ENCODE measurements at regions of chr6 and their contacts with region 1.

Region 1: GRCh38 chr6:2988426-2989331 is 11.0 kb upstream of the NQO2 start:
- DNase-seq: peak; percentile 95
- ATAC-seq: peak; percentile 83
- H3K4me3 ChIP-seq: peak overlapping the region; percentile 72
- H3K27ac ChIP-seq: peak overlapping the region; percentile 90
- H3K4me1 ChIP-seq: peaks cover 14% of the 10 kb centered on the region
- H3K27me3 ChIP-seq: no peaks in the 10 kb centered on the region
- CTCF ChIP-seq: peak; percentile 89
- POLR2A ChIP-seq: peak; percentile 61
- RAD21 ChIP-seq: peak; percentile 84

Region 2: DNA sequence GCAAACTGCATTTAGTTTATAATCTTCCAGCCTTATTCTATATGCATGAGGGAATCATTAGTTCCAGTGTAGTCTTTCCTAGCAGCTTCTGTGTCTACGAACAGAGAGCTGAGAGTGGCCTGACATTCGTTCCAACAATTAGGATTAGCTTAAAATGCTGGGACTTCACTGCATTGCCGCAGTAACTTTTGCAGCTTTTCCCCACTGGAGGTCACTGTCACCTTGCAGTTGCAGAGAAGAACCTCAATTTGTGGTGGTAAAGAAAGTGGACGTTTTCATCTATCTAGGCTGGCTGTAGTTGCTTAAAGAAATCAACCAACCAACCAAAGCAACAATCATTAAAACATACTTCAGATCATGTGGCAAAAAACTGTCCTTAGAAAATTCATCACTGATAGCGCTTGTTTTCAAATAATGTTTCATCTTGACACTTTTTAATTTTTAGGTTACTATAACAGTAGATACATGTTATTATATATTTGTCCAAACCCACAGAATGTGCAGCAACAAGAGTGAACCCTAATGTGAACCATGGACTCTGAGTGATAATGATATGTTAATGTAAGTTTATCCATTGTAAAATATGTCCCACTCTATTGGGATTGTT is 250.2 kb before region 1 on chr6:
- CTCF ChIA-PET with region 1: interaction called, 5 read pairs
- POLR2A ChIA-PET with region 1: no interaction called
- dilution Hi-C with region 1: no loop called
- in situ Hi-C with region 1: no loop called
- intact Hi-C with region 1: loop called (anchors 1 kb)
- DNase-seq: peak; percentile 80
- ATAC-seq: peak; percentile 78
- H3K4me3 ChIP-seq: no peak overlapping the region
- H3K27ac ChIP-seq: no peak overlapping the region
- H3K4me1 ChIP-seq: peaks cover 11% of the 10 kb centered on the region; the same call in 1 of the 2 replicates
- H3K27me3 ChIP-seq: no peaks in the 10 kb centered on the region
- CTCF ChIP-seq: peak; percentile 92
- POLR2A ChIP-seq: no peak
- RAD21 ChIP-seq: peak; percentile 94

Region 3: DNA sequence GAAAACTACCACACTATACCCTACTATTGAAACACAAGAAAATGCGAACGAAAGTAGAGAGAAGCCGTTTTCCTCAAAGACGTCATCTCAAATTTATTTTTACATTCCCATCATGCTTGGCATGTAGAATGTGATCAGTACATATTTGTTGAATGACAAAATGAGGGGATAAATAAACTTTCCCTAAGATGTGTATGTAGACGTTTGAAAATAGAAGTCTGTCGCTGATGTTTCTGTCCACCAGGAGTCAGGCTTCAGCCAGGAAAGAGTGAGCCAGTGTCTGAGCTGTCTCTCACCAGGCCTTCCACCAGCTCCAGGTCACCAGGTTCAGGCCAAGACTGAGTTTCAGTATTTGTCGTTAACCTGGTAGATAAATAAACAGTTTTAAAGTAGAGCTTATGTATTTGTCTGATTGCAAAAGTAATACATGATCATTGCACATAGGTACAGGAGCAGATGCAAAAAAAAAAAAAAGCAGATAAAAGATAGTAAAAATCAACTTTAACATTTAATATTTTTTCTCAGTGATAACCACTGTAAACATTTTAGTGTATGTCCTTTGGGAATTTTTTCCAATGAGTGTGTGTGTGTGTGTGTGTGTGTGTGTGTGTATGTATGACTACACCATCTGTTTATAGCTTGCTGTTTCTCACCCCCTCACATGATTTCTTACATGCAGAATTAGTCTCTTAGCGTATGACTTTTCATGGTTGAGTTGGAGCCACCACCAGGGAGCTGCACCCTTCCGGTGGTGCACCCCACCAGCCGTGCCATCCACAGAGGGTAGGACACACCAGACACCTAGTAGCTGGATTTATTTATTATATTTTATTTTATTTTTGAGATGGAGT is 197.3 kb before region 1 on chr6:
- CTCF ChIA-PET with region 1: interaction called, 14 read pairs
- POLR2A ChIA-PET with region 1: interaction called, 8 read pairs
- dilution Hi-C with region 1: no loop called
- in situ Hi-C with region 1: no loop called
- intact Hi-C with region 1: loop called (anchors 1 kb)
- DNase-seq: peak; percentile 97
- ATAC-seq: peak; percentile 84
- H3K4me3 ChIP-seq: peak overlapping the region; percentile 20; the same call in 1 of the 2 replicates
- H3K27ac ChIP-seq: peak overlapping the region; percentile 91
- H3K4me1 ChIP-seq: peaks cover 18% of the 10 kb centered on the region
- H3K27me3 ChIP-seq: no peaks in the 10 kb centered on the region
- CTCF ChIP-seq: peak; percentile 96
- POLR2A ChIP-seq: peak; percentile 76; the same call in 1 of the 2 replicates
- RAD21 ChIP-seq: peak; percentile 97

Region 4: DNA sequence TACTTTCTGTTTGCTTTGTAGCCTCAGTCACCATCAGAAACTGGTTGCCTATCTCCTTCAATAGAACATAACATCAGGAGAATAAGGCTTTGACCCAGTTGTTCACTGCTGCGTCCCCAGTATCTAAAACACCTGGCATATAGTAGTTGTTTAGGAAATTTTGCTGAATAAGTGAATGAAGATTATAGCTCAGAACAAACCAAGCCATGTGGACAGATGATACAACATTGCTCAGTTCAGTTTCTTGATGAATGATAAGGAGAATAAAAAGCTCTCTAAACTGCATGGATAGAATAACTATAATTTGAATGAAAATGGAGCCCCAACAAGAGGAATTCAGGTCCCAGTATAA is 141.8 kb before region 1 on chr6:
- CTCF ChIA-PET with region 1: interaction called, 13 read pairs
- POLR2A ChIA-PET with region 1: interaction called, 12 read pairs
- dilution Hi-C with region 1: no loop called
- in situ Hi-C with region 1: no loop called
- intact Hi-C with region 1: loop called (anchors 1 kb)
- DNase-seq: no peak
- ATAC-seq: no peak
- H3K4me3 ChIP-seq: peak overlapping the region; percentile 34; the same call in 1 of the 2 replicates
- H3K27ac ChIP-seq: peak overlapping the region; percentile 81
- H3K4me1 ChIP-seq: peaks cover 18% of the 10 kb centered on the region
- H3K27me3 ChIP-seq: no peaks in the 10 kb centered on the region
- CTCF ChIP-seq: no peak
- POLR2A ChIP-seq: no peak
- RAD21 ChIP-seq: no peak

Region 5: GRCh38 chr6:2971420-2972218 is 17.1 kb before region 1 on chr6 and contains the start of gene SERPINB6:
- CTCF ChIA-PET with region 1: interaction called, 6 read pairs
- POLR2A ChIA-PET with region 1: interaction called, 4 read pairs
- dilution Hi-C with region 1: no loop called
- in situ Hi-C with region 1: no loop called
- intact Hi-C with region 1: loop called (anchors 1 kb)
- DNase-seq: peak; percentile 71
- ATAC-seq: peak; percentile 68
- H3K4me3 ChIP-seq: peak within 1 kb of the TSS; percentile 42
- H3K27ac ChIP-seq: peak within 1 kb of the TSS; percentile 78
- H3K4me1 ChIP-seq: peaks cover 6% of the 10 kb centered on the region
- H3K27me3 ChIP-seq: no peaks in the 10 kb centered on the region
- CTCF ChIP-seq: no peak
- POLR2A ChIP-seq: 0 out of 2 replicates have a peak, but pooled peaks have one; percentile 19
- RAD21 ChIP-seq: no peak
- total RNA-seq, gene SERPINB6: 37.1 and 60.3 TPM in 2 replicates

Region 6: GRCh38 chr6:3258720-3259490 is 270.2 kb after region 1 on chr6 and contains the start of gene PSMG4:
- CTCF ChIA-PET with region 1: no interaction called
- POLR2A ChIA-PET with region 1: no interaction called
- dilution Hi-C with region 1: no loop called
- in situ Hi-C with region 1: loop called (anchors 10 kb)
- intact Hi-C with region 1: no loop called
- DNase-seq: peak; percentile 82
- ATAC-seq: peak; percentile 96
- H3K4me3 ChIP-seq: peak within 1 kb of the TSS; percentile 99
- H3K27ac ChIP-seq: peak within 1 kb of the TSS; percentile 85
- H3K4me1 ChIP-seq: peaks cover 3% of the 10 kb centered on the region; the same call in 1 of the 2 replicates
- H3K27me3 ChIP-seq: peaks cover 1% of the 10 kb centered on the region; the same call in 1 of the 2 replicates
- CTCF ChIP-seq: no peak
- POLR2A ChIP-seq: peak; percentile 61
- RAD21 ChIP-seq: no peak
- total RNA-seq, gene PSMG4: 5.6 and 6.7 TPM in 2 replicates

Region 7: GRCh38 chr6:4018172-4018905 is 1029.7 kb after region 1 on chr6:
- CTCF ChIA-PET with region 1: no interaction called
- POLR2A ChIA-PET with region 1: no interaction called
- dilution Hi-C with region 1: no loop called
- in situ Hi-C with region 1: no loop called
- intact Hi-C with region 1: no loop called
- DNase-seq: peak; percentile 95
- ATAC-seq: peak; percentile 77
- H3K4me3 ChIP-seq: peak overlapping the region; percentile 72
- H3K27ac ChIP-seq: peak overlapping the region; percentile 80
- H3K4me1 ChIP-seq: no peaks in the 10 kb centered on the region; the same call in 1 of the 2 replicates
- H3K27me3 ChIP-seq: no peaks in the 10 kb centered on the region
- CTCF ChIP-seq: peak; percentile 37
- POLR2A ChIP-seq: peak; percentile 80
- RAD21 ChIP-seq: no peak

Measured in IMR-90 (cell line).